AG04450 (cell line): ENCODE measurements at regions of chr7 and their contacts with region 1.

Region 1: GRCh38 chr7:137992550-137993394 is 9.1 kb downstream of the CREB3L2 start:
- DNase-seq: peak; percentile 93
- H3K4me3 ChIP-seq: peak overlapping the region; percentile 34
- H3K27ac ChIP-seq: peak overlapping the region; percentile 98
- H3K27me3 ChIP-seq: no peaks in the 10 kb centered on the region
- CTCF ChIP-seq: no peak

Region 2: GRCh38 chr7:136869001-136869961 is 1123.5 kb before region 1 on chr7:
- CTCF ChIA-PET with region 1: no interaction called
- POLR2A ChIA-PET with region 1: interaction called, 10 read pairs
- DNase-seq: no peak
- H3K4me3 ChIP-seq: peak overlapping the region; percentile 87
- H3K27ac ChIP-seq: peak overlapping the region; percentile 72
- H3K27me3 ChIP-seq: no peaks in the 10 kb centered on the region
- CTCF ChIP-seq: no peak

Region 3: DNA sequence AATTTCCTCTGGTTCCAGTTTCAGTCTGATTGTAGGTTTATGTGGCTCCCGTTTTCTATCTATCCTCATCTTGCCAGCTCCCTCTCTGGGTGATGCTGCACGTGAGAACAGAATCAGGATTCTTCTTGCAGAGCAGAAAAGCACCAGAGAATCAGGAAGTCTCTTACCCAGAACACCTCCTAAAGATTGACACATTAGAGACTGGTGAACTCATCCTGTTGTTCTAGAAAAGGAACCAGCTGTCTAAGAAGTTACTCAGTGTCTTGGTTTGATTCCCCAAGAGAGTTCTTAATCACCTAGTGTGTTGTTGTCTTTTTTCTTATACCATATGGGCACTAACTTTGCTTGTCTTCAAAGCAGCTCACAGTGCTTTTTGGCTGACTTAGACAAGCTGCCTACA is 298.4 kb before region 1 on chr7:
- CTCF ChIA-PET with region 1: no interaction called
- POLR2A ChIA-PET with region 1: no interaction called
- DNase-seq: no peak
- H3K4me3 ChIP-seq: no peak overlapping the region
- H3K27ac ChIP-seq: no peak overlapping the region
- H3K27me3 ChIP-seq: no peaks in the 10 kb centered on the region
- CTCF ChIP-seq: no peak

Region 4: DNA sequence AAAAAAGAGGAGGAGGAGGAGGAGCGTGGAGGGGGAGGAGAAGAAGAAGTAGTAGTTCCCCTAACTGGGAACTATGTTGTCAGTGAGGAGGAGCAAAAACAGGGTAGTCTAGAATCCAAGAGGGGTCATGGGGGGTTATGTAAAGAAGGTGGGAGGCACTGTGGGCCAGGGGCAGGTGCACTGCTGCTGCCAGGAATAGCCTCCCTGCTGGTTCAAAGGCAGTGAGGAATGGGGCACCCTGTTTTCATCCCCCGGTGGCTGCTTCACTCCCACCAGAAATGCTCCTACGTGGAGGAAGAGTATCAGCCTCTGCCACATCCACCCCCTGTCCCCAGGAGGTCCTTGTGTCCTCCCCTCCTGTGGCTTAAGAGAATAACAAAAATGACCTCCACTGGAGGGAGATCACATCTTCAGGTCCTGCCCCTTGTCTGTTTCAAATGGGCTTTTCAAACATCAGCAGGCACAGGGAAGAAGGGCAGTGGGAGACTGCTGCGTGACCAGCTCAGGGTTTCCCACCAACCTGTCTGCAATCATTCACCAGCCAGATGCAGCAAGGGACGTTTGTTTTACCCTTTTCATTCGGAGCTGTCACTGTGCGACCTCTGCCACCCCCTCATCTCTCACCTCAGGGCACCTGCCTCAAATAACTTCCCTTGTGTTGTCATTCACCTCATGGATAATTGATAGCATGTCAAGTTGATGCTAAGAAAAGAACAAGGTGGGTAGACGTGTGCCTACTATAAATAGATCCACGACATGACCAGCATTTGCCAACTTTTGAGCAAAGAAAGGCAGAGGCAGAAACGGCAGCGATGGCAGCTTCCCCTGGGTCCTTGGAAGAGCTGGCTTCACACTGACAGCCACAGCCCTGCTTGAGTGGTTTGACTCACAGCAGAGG is 238.6 kb before region 1 on chr7:
- CTCF ChIA-PET with region 1: no interaction called
- POLR2A ChIA-PET with region 1: no interaction called
- DNase-seq: no peak
- H3K4me3 ChIP-seq: no peak overlapping the region
- H3K27ac ChIP-seq: no peak overlapping the region
- H3K27me3 ChIP-seq: peaks cover 2% of the 10 kb centered on the region
- CTCF ChIP-seq: no peak

Region 5: DNA sequence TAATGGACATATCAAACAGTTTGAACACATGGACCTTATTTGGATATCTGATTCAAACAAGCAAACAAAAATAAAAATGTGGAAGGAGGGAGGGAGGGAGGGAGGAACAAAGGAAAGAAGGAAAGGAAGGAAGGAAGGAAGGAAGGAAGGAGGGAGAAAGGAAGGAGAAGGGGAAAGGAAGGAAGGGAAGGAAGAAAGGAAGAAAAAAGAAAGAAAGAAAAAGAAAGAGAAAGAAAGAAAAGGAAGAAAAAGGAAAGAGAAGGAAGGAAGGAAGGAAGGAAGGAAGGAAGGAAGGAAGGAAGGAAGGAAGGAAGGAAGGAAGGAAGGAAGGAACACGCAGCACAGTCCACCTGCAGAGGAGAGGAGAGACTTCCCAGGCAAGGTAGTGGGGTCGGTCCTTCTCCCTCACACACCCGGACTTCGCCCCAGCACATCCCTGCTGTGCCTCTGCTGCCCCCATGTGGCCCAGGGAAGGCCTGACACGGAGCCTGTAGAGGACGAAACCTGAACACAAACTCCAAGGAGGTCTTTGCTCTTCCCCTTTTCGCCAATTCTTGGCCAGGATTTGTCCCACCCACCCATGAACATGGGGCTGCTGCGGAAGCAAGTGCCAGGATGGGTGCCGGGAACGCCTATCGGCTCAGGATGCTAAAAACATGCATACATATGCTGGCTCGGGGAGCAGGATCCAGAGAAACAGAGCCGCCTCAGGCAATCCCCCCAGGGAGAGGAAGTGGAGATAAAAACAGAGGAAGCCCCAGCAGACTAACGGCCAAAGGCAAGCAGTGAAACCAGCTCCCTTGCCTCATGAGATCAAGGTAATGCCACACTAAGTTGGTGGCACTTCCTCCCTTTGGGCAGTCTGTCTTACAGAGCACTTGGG is 93.7 kb before region 1 on chr7:
- CTCF ChIA-PET with region 1: interaction called, 18 read pairs
- POLR2A ChIA-PET with region 1: no interaction called
- DNase-seq: peak; percentile 47
- H3K4me3 ChIP-seq: no peak overlapping the region
- H3K27ac ChIP-seq: peak overlapping the region; percentile 47
- H3K27me3 ChIP-seq: no peaks in the 10 kb centered on the region
- CTCF ChIP-seq: peak; percentile 98

Region 6: GRCh38 chr7:137953665-137954470 is 38.9 kb before region 1 on chr7:
- CTCF ChIA-PET with region 1: no interaction called
- POLR2A ChIA-PET with region 1: interaction called, 32 read pairs
- DNase-seq: no peak
- H3K4me3 ChIP-seq: peak overlapping the region; percentile 8; the same call in 1 of the 2 replicates
- H3K27ac ChIP-seq: peak overlapping the region; percentile 92
- H3K27me3 ChIP-seq: no peaks in the 10 kb centered on the region
- CTCF ChIP-seq: no peak

Region 7: GRCh38 chr7:137975221-137975620 is 17.6 kb before region 1 on chr7:
- CTCF ChIA-PET with region 1: interaction called, 3 read pairs
- POLR2A ChIA-PET with region 1: interaction called, 24 read pairs
- DNase-seq: no peak
- H3K4me3 ChIP-seq: no peak overlapping the region
- H3K27ac ChIP-seq: peak overlapping the region; percentile 78
- H3K27me3 ChIP-seq: no peaks in the 10 kb centered on the region
- CTCF ChIP-seq: no peak

Region 8: GRCh38 chr7:138015096-138015495 is 22.3 kb after region 1 on chr7:
- CTCF ChIA-PET with region 1: no interaction called
- POLR2A ChIA-PET with region 1: no interaction called
- DNase-seq: no peak
- H3K4me3 ChIP-seq: no peak overlapping the region
- H3K27ac ChIP-seq: no peak overlapping the region
- H3K27me3 ChIP-seq: peaks cover 8% of the 10 kb centered on the region
- CTCF ChIP-seq: no peak